Calu3 (cell line): ENCODE measurements at regions of chr4 and their contacts with region 1.

Region 1: DNA sequence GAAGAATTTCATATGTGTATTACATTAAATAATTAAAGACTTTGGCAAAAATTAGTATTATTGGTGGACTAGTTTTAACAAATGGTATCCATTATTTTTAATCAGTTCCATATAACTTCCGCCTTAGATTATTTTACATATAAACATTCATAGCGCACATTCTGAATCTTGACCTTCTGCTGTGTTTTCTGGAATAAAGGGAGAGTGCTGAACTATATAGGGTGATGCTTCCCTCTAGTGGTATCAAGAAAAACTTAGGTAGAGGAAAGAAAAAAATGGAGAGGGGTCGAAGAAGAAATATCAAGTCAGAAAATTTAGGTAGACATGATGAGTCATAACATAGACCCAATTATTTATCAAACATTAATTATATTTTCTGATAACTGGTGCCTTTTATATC is 155.6 kb upstream of the PACRGL start:
- DNase-seq: no peak
- H3K4me3 Mint-ChIP-seq: no peak overlapping the region
- H3K27ac Mint-ChIP-seq: no peak overlapping the region
- H3K4me1 Mint-ChIP-seq: no peaks in the 10 kb centered on the region
- H3K27me3 Mint-ChIP-seq: no peaks in the 10 kb centered on the region
- CTCF ChIP-seq: no peak

Region 2: GRCh38 chr4:20305976-20306375 is 238.7 kb before region 1 on chr4:
- CTCF ChIA-PET with region 1: no interaction called
- intact Hi-C with region 1: loop called (anchors 10 kb)
- DNase-seq: peak; percentile 15
- H3K4me3 Mint-ChIP-seq: no peak overlapping the region
- H3K27ac Mint-ChIP-seq: no peak overlapping the region
- H3K4me1 Mint-ChIP-seq: no peaks in the 10 kb centered on the region
- H3K27me3 Mint-ChIP-seq: no peaks in the 10 kb centered on the region
- CTCF ChIP-seq: no peak